Activated CD4-positive, alpha-beta memory T cell treated with anti-CD3 and anti-CD28 coated beads for 36 hours (primary cell): ENCODE measurements at regions of chr17 and their contacts with region 1.

Region 1: DNA sequence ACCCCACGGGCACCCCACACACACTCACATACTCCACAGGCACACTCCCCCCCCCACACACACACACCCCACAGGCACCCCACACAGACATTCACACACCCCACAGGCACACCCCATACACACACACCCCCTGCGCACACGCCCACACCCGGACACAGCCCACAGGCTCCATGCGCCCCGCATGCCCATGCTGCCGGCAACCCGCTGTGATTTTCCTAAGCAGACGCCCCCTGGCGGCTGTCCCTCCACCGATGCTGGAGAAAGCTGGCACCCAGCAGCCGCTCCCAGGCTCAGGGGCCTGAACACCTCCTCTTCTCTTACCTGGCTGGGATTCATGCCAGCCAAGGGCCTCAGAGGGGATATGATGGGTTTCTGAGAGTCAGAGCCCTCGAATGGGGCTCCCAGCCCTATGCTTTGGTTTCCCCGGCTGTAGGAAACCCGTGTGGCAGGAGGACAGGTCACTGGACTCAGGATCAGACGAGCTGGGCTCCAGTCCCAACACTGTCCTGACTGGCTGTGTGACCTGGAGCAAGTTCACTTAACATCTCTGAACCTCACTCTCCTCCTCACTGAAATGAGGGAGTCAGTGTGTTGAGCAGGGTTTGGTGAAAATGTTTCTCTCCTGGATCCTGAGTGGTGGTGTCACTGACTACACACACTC is 19.6 kb upstream of the TNFRSF13B start:
- DNase-seq: peak; percentile 86
- H3K4me3 Mint-ChIP-seq: no peak overlapping the region
- H3K27ac Mint-ChIP-seq: no peak overlapping the region
- H3K4me1 Mint-ChIP-seq: peaks cover 35% of the 10 kb centered on the region
- H3K27me3 Mint-ChIP-seq: no peaks in the 10 kb centered on the region

Region 2: GRCh38 chr17:16915752-16916556 is 75.5 kb before region 1 on chr17:
- CTCF ChIA-PET with region 1: interaction called, 15 read pairs
- POLR2A ChIA-PET with region 1: no interaction called
- intact Hi-C with region 1: no loop called
- DNase-seq: peak; percentile 61
- H3K4me3 Mint-ChIP-seq: no peak overlapping the region
- H3K27ac Mint-ChIP-seq: no peak overlapping the region
- H3K4me1 Mint-ChIP-seq: peaks cover 5% of the 10 kb centered on the region
- H3K27me3 Mint-ChIP-seq: no peaks in the 10 kb centered on the region

Region 3: DNA sequence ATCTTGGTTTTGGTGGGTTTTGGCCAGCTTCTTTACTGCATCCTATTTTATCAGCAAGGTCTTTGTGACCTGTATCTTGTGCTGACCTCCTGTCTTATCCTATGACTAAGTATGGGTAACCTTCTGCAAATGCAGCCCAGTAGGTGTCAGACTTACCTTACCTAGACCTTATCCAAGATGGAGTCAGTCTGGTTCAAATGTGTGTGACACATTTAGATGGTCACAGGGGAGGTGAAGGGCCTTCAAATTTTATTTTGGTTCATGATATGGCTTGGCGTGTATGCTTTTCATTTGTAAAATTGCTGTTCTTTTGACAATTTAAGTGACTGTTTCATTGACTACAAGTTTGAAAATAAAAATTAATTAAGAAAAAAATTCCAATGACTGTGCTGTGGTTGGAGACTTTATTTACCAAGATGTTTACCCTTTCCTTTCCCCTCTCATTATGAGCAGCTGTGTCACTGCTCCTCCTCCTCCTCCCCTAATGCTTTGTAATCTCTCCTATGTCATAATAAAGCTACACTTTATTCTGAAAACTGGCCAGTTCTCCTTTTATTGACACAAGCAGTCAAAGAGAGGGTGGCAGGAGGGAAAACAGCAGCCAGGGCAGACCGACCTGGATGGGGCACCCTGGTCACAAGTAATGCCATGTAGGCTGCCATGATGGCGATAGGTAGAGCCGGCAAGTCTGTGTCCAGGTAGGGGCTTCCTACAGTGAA is 68.9 kb before region 1 on chr17:
- CTCF ChIA-PET with region 1: interaction called, 8 read pairs
- POLR2A ChIA-PET with region 1: no interaction called
- intact Hi-C with region 1: loop called (anchors 1 kb)
- DNase-seq: peak; percentile 7
- H3K4me3 Mint-ChIP-seq: no peak overlapping the region
- H3K27ac Mint-ChIP-seq: no peak overlapping the region
- H3K4me1 Mint-ChIP-seq: no peaks in the 10 kb centered on the region
- H3K27me3 Mint-ChIP-seq: no peaks in the 10 kb centered on the region

Region 4: DNA sequence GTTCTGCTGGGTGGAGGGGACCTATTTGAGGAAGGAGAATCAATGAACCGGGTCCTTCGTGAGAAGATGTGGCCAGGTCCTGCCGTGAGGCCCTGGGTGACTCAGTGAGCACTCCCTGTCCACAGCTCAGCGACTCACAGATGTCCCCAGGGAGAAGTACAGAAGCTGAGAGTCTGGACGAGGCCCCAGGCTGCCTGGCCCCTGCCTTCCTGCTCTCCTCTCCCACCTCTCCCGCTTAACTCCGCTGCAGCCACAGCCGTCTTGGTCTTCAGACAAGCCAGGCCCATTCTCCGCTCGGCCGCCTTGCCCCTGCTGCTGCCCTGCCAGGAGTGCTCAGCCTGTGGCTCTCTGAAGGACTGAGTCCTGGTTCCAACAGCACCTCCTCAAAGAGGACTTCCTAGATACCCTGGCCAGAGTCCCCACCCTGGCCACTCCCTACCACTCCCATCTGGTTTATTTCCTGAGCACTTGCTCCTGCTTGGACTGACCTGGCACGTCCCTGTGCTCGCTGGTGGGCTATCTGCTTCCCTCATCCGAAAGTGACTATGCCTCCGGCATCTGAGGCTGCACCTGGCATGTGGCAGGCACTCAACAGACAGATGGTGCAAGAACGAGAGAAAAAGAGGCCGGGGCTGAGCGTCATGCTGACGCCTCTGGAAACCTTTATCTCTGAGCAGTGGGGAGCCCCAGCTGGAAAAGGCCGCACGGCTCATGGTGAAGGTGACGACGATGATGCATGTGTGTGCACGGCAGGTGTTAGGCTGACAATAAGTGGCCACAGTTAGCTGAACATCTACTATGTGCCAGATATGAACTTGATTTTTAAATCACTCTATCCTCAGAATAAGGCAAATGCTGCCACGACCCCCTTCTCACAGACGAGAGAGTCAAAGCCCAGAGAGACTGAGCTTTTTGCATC is 10.4 kb before region 1 on chr17:
- CTCF ChIA-PET with region 1: interaction called, 15 read pairs
- POLR2A ChIA-PET with region 1: no interaction called
- intact Hi-C with region 1: no loop called
- DNase-seq: no peak
- H3K4me3 Mint-ChIP-seq: no peak overlapping the region
- H3K27ac Mint-ChIP-seq: no peak overlapping the region
- H3K4me1 Mint-ChIP-seq: peaks cover 9% of the 10 kb centered on the region
- H3K27me3 Mint-ChIP-seq: no peaks in the 10 kb centered on the region

Region 5: GRCh38 chr17:17075038-17075781 is 83.7 kb after region 1 on chr17:
- CTCF ChIA-PET with region 1: no interaction called
- POLR2A ChIA-PET with region 1: no interaction called
- intact Hi-C with region 1: no loop called
- DNase-seq: no peak
- H3K4me3 Mint-ChIP-seq: no peak overlapping the region
- H3K27ac Mint-ChIP-seq: no peak overlapping the region
- H3K4me1 Mint-ChIP-seq: peaks cover 41% of the 10 kb centered on the region
- H3K27me3 Mint-ChIP-seq: no peaks in the 10 kb centered on the region